Naive thymus-derived CD4-positive, alpha-beta T cell (primary cell): ENCODE measurements at regions of chr14 and their contacts with region 1.

Region 1: GRCh38 chr14:56339855-56340701 is 221.9 kb downstream of the PELI2 start:
- DNase-seq: peak; percentile 14 to 57 (median 46)
- ATAC-seq: peak; percentile 91
- H3K4me3 ChIP-seq: no peak overlapping the region
- H3K4me3 Mint-ChIP-seq: peak overlapping the region in 1 of 10 donors; percentile 20
- H3K27ac ChIP-seq: no peak overlapping the region
- H3K27ac Mint-ChIP-seq: peak overlapping the region in 1 of 9 donors; percentile 16
- H3K4me1 ChIP-seq: no peaks in the 10 kb centered on the region
- H3K4me1 Mint-ChIP-seq: peaks cover 0 to 14% (median 0%) of the 10 kb centered on the region in 7 donors
- H3K27me3 ChIP-seq: no peaks in the 10 kb centered on the region
- H3K27me3 Mint-ChIP-seq: no peaks in the 10 kb centered on the region

Region 2: DNA sequence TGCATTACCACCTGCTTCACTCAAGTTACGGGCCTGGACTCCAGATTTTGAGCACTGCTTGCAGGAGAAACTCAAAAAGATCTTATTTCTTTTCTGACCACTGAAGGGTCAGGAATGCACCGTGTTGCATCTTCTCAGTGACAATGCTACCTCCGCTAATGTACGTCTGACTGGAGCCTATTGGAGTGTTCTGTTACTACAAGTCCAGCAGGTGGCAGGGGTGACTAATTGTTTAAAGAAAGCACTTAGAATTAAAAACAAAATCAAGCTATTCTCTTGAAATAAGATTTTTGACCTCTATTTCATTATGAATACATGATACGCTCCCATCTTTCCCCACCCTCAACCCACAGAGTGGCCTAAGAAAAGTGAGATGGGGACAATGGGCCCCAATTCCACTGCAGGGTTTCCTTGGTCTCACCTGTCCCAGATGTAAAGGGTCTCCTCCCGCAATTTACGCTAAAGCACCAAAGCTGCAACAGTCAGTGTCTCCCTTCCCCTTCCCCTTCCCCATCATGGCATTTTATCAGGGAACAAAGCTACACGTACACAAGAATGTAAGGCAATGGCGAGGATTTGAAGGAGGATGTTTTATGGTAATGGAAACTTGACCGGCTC is 901.9 kb before region 1 on chr14:
- CTCF ChIA-PET with region 1: interaction called, 3 read pairs
- POLR2A ChIA-PET with region 1: no interaction called
- intact Hi-C with region 1: loop called in 1 of 2 experiments (anchors 1 kb)
- DNase-seq: peak in 4 of 9 donors; percentile 15 to 29 (median 16)
- ATAC-seq: no peak
- H3K4me3 ChIP-seq: no peak overlapping the region
- H3K4me3 Mint-ChIP-seq: no peak overlapping the region
- H3K27ac ChIP-seq: no peak overlapping the region
- H3K27ac Mint-ChIP-seq: peak overlapping the region in 2 of 9 donors; percentile 36 to 84
- H3K4me1 ChIP-seq: peaks cover 15 to 23% of the 10 kb centered on the region in 2 donors
- H3K4me1 Mint-ChIP-seq: peaks cover 11 to 28% (median 25%) of the 10 kb centered on the region in 7 donors
- H3K27me3 ChIP-seq: no peaks in the 10 kb centered on the region
- H3K27me3 Mint-ChIP-seq: peaks cover 0 to 10% (median 0%) of the 10 kb centered on the region in 5 donors

Region 3: GRCh38 chr14:55707365-55707804 is 632.7 kb before region 1 on chr14:
- CTCF ChIA-PET with region 1: interaction called, 4 read pairs
- POLR2A ChIA-PET with region 1: no interaction called
- intact Hi-C with region 1: loop called (anchors 1 kb)
- DNase-seq: peak in 4 of 9 donors; percentile 2 to 31 (median 17)
- ATAC-seq: no peak
- H3K4me3 ChIP-seq: no peak overlapping the region
- H3K4me3 Mint-ChIP-seq: no peak overlapping the region
- H3K27ac ChIP-seq: no peak overlapping the region
- H3K27ac Mint-ChIP-seq: no peak overlapping the region
- H3K4me1 ChIP-seq: no peaks in the 10 kb centered on the region
- H3K4me1 Mint-ChIP-seq: no peaks in the 10 kb centered on the region
- H3K27me3 ChIP-seq: no peaks in the 10 kb centered on the region
- H3K27me3 Mint-ChIP-seq: peaks cover 0 to 2% (median 0%) of the 10 kb centered on the region in 5 donors

Region 4: DNA sequence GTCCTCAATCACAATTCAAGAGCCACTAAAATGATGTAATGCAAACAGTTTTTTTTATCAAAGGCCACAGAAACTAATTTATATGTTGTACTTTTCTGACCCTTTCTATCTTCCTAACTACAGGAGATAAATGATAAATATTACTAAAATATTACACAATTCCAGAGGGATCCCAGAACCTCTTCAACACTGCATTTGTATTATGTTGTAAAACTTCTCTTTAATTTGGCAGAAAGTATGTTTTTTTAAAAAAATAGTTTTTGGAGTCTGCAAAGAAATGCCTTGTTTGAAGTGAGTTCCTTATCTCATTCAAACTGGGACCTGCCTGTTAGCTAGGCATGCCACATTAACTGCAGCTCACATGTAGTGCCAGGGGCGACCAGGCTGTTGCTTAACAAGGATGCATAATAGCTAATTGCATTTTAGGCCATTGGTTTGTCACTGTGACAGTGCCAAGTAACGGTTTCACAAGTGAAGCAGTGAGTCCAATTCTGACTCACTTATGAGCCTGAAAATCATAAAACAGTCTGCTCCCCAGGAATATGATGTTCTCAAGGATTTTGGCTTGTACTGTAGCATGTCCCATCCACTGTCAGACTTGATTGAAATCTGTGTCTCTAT is 493.1 kb before region 1 on chr14:
- CTCF ChIA-PET with region 1: no interaction called
- POLR2A ChIA-PET with region 1: no interaction called
- intact Hi-C with region 1: loop called in 1 of 2 experiments (anchors 2 kb)
- DNase-seq: no peak
- ATAC-seq: no peak
- H3K4me3 ChIP-seq: no peak overlapping the region
- H3K4me3 Mint-ChIP-seq: no peak overlapping the region
- H3K27ac ChIP-seq: no peak overlapping the region
- H3K27ac Mint-ChIP-seq: no peak overlapping the region
- H3K4me1 ChIP-seq: no peaks in the 10 kb centered on the region
- H3K4me1 Mint-ChIP-seq: no peaks in the 10 kb centered on the region
- H3K27me3 ChIP-seq: no peaks in the 10 kb centered on the region
- H3K27me3 Mint-ChIP-seq: peaks cover 0 to 12% (median 0%) of the 10 kb centered on the region in 5 donors

Region 5: DNA sequence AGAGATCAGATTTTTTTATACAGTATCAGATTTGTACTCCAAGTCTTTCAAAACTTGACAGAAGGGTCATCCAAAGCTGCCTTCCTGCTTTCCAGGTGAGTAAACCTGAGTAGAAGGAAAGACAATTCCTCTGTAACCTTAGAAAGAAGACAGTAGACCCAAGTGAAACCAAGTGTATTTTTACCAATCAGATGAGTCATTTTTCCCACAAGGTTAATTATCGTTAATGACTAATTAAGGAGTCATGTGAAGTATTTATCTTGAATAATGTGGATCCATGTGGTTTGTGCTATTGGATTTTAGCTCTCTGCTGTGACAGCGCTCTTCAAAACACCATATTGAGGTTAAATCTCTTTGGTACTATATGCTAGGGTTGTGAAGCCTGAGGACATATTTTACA is 295.9 kb before region 1 on chr14:
- CTCF ChIA-PET with region 1: no interaction called
- POLR2A ChIA-PET with region 1: no interaction called
- intact Hi-C with region 1: no loop called
- DNase-seq: no peak
- ATAC-seq: no peak
- H3K4me3 ChIP-seq: no peak overlapping the region
- H3K4me3 Mint-ChIP-seq: no peak overlapping the region
- H3K27ac ChIP-seq: no peak overlapping the region
- H3K27ac Mint-ChIP-seq: no peak overlapping the region
- H3K4me1 ChIP-seq: no peaks in the 10 kb centered on the region
- H3K4me1 Mint-ChIP-seq: no peaks in the 10 kb centered on the region
- H3K27me3 ChIP-seq: peaks cover 0 to 2% of the 10 kb centered on the region in 2 donors
- H3K27me3 Mint-ChIP-seq: peaks cover 2 to 31% (median 19%) of the 10 kb centered on the region in 5 donors

Region 6: DNA sequence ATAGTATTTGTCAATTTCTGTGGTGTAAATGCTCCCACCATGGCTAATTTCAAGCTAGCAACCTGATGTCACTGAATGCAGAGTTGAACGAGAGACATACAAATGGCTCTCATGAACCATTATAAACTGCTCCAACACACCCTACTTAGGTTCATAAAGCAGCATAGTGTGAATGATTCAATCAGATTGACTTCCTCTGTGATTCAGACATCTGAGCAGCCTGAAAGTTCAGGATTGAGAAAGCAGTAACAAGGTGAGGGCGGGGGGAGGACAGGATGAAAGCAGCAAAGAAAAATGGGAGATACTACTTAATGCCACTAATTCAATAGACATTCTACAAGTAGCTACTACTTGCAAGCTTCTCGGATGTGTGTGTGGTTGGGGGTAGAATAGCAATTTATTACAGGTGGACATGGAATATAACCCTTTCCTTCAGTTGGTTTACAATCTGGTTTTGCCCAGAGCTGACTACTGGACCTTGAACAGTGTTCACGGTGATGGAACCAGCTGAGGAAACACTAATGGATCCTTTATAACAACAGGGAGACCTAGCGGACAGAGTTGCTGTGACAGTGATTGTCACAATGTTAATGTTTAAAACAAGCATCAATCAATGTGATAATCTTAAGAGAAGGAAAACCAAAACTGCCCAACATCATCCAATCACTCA is 274.3 kb before region 1 on chr14:
- CTCF ChIA-PET with region 1: no interaction called
- POLR2A ChIA-PET with region 1: no interaction called
- intact Hi-C with region 1: loop called in 1 of 2 experiments (anchors 10 kb)
- DNase-seq: no peak
- ATAC-seq: no peak
- H3K4me3 ChIP-seq: no peak overlapping the region
- H3K4me3 Mint-ChIP-seq: no peak overlapping the region
- H3K27ac ChIP-seq: no peak overlapping the region
- H3K27ac Mint-ChIP-seq: no peak overlapping the region
- H3K4me1 ChIP-seq: no peaks in the 10 kb centered on the region
- H3K4me1 Mint-ChIP-seq: peaks cover 0 to 1% (median 0%) of the 10 kb centered on the region in 7 donors
- H3K27me3 ChIP-seq: no peaks in the 10 kb centered on the region
- H3K27me3 Mint-ChIP-seq: peaks cover 4 to 5% (median 4%) of the 10 kb centered on the region in 5 donors